ACHN (cell line): ENCODE measurements at regions of chr10 and their contacts with region 1.

Region 1: DNA sequence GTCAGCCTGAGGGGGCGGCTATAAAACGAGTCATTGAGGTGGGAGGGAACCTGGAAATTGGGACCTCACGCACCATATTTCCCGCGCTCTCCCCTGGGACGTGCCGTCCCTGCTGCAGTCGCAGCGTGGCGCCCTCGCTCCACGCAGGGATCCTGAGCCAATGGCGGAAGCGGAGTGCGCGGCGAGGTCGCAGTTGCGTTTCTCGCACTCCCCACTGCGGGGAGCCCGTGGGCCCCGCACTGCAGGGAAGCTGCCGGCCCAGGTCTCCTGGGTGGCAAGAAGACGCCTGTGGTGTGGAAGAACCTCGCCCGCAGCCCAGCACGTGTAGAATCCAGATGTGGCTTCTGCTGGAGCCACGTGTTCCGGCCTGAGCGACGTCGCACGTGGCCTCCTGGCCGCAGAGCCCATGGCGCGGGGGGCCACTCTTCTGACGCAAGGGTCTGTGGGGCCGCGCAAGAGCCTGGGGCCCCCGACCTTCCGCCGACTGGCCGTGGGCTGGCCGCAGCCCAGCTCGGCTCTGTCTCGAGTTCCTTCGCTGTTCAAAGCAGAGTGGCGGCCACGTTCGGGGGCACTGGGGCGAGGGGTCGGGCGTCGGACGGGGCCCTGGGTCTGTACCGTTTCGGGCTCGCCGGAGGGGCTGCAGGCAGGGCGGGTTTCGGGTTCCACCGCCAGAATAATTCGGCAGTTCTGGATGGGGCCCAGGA is 26.4 kb downstream of the HIF1AN start:
- DNase-seq: peak; percentile 91

Region 2: GRCh38 chr10:100878291-100878910 is 316.2 kb after region 1 on chr10:
- in situ Hi-C with region 1: loop called (anchors 25 kb)
- DNase-seq: peak; percentile 87